ENCODE measurements at regions of chr22 and their contacts with region 1.

Region 1: DNA sequence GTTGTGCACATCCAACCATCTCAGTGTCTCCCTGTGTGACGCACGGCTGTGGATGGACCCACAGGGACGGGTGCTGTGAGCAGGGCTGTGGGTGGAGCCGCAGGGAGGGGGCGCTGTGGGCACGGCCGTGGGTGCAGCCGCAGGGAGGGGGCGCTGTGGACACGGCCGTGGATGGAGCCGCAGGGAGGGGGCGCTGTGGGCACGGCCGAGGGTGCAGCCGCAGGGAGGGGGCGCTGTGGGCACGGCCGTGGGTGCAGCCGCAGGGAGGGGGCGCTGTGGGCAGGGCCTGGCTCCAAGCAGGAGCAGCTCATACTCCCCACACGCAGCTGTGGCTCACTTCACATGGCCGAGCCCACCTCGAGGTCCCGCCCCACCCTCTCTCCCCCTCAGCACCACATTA is 6.0 kb upstream of the MAPK11 start:
- DNase-seq: peak; percentile 81
- H3K4me3 ChIP-seq: no peak overlapping the region
- H3K27ac ChIP-seq: peak overlapping the region in 1 of 4 donors; percentile 40
- H3K4me1 ChIP-seq: peaks cover 10 to 12% (median 11%) of the 10 kb centered on the region in 4 donors
- H3K27me3 ChIP-seq: peaks cover 11% of the 10 kb centered on the region
- CTCF ChIP-seq: peak; percentile 9 to 74 (median 54)
- EP300 ChIP-seq: no peak
- POLR2A ChIP-seq: no peak

Region 2: DNA sequence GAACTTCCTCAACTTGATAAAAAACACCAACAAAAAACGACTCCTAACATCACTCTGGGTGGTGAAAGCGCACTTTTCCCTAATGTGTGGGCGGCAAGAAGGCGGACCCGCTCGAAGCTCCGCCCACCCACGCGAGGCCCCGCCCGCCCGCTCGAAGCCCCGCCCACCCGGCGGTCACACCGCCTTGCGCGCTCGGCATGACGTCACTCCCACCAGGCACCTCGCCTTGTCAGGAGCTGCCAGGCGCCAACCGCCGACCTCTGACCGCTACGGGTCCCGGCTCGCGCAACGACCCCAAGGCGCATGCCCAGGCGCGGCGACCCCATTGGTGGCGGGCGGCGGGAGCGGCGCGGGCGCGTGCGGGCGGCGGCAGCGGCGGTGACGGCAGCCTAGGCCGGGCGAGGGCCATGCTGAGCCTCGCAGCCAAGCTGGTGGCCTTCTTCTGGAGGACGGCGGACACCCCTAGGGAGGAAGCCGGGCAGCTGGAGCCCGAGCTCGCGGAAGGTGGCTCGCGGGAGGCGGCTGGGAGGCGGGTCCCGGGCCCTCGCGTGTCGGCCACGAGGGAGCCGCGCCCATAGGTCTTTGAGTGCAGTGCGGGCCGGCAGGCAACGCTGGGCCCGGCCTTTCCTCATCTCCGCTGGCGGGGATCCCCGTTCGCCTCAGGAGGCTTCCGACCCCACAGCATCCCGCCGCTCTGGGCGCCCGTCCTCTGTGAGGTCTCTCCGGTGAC is 186.3 kb before region 1 on chr22 and contains the start of gene MOV10L1:
- in situ Hi-C with region 1: no loop called
- intact Hi-C with region 1: no loop called
- DNase-seq: no peak
- H3K4me3 ChIP-seq: no peak within 1 kb of the TSS
- H3K27ac ChIP-seq: no peak within 1 kb of the TSS
- H3K4me1 ChIP-seq: no peaks in the 10 kb centered on the region
- H3K27me3 ChIP-seq: peaks cover 29% of the 10 kb centered on the region
- CTCF ChIP-seq: no peak
- EP300 ChIP-seq: no peak
- POLR2A ChIP-seq: no peak
- total RNA-seq, gene MOV10L1: 0.20 to 0.48 (median 0.41) TPM in 3 of 4 donors, not detected in the other

Region 3: GRCh38 chr22:50315289-50316115 is 39.4 kb after region 1 on chr22:
- in situ Hi-C with region 1: no loop called
- intact Hi-C with region 1: no loop called
- DNase-seq: no peak
- H3K4me3 ChIP-seq: no peak overlapping the region
- H3K27ac ChIP-seq: peak overlapping the region in 3 of 4 donors; percentile 65 to 73 (median 69)
- H3K4me1 ChIP-seq: peaks cover 6 to 15% (median 12%) of the 10 kb centered on the region in 4 donors
- H3K27me3 ChIP-seq: no peaks in the 10 kb centered on the region
- CTCF ChIP-seq: no peak
- EP300 ChIP-seq: no peak
- POLR2A ChIP-seq: no peak

Region 4: DNA sequence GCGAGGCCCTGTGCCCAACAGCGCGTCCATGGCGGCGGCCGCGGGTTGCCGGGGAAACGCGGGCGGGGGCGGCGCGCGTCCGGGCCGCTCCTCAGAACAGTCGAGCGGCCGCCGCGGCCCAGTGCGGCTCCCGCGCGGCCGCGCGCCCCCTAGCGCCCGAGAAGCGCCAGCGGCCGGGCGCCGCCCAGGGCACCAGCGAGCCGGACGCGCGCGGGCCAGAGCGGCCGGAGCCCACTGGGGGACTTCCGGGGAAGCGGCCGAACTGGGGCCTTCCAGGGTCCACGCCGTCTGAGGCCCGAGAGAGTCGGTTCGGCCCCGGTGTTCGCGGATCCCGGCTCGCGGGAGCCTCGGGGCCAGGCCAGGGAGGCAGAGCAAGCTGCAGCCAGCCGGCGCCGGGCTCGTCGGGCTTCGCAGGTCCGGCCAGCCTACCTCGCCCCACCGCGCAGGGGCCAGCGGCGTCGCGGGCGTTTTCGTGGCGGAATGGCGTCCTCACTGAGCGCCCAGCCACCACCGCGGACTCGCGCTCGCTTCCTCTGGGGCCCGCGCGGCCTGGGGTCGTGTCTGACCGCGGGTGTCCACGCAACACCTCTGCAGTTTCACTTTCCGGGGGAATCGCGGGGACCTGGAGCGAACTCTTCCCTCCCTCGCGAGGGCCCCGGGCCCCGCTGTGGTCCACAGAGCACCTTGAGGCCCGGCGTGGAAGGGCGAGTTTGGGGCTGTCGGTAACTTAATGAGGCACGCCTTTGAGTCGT is 51.0 kb after region 1 on chr22 and contains the start of gene DENND6B:
- in situ Hi-C with region 1: loop called in 2 of 4 experiments (anchors 5 to 10 kb)
- intact Hi-C with region 1: loop called (anchors 5 kb)
- DNase-seq: peak; percentile 83
- H3K4me3 ChIP-seq: peak within 1 kb of the TSS; percentile 50 to 82 (median 76)
- H3K27ac ChIP-seq: peak within 1 kb of the TSS; percentile 93 to 94 (median 94)
- H3K4me1 ChIP-seq: peaks cover 11 to 24% (median 13%) of the 10 kb centered on the region in 4 donors
- H3K27me3 ChIP-seq: no peaks in the 10 kb centered on the region
- CTCF ChIP-seq: peak; percentile 38 to 64 (median 43)
- EP300 ChIP-seq: no peak
- POLR2A ChIP-seq: peak; percentile 67
- total RNA-seq, gene DENND6B: 3.2 to 22.7 (median 8.3) TPM

Region 5: GRCh38 chr22:50339945-50340879 is 64.1 kb after region 1 on chr22:
- in situ Hi-C with region 1: loop called in 1 of 4 experiments (anchors 10 kb)
- intact Hi-C with region 1: no loop called
- DNase-seq: no peak
- H3K4me3 ChIP-seq: no peak overlapping the region
- H3K27ac ChIP-seq: no peak overlapping the region
- H3K4me1 ChIP-seq: peaks cover 4 to 12% (median 7%) of the 10 kb centered on the region in 4 donors
- H3K27me3 ChIP-seq: no peaks in the 10 kb centered on the region
- CTCF ChIP-seq: no peak
- EP300 ChIP-seq: no peak
- POLR2A ChIP-seq: no peak

Region 6: DNA sequence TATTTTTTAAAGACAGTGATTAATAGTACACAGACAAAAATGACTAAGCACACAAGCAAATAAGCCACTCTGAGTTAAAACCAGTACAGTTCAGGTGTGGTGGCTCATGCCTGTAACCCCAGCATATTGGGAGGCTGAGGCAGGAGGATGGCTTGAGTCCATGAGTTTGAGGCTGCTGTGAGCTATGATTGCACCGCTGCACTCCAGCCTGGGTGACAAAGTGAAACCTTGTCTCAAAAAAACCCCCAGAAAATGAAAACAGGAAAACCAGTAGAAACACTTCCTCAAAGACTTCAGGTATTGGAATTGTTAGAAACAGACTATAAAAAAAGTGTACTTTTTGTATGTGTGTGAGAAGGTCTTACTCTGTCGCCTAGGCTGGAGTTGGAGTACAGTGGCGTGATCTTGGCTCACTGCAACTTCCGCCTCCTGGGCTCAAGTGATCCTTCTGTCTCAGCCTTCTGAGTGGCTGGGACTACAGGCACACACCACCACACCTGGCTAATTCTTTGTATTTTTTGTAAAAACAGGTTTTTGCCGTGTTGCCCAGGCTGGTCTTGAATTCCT is 100.0 kb after region 1 on chr22:
- in situ Hi-C with region 1: no loop called
- intact Hi-C with region 1: no loop called
- DNase-seq: no peak
- H3K4me3 ChIP-seq: no peak overlapping the region
- H3K27ac ChIP-seq: no peak overlapping the region
- H3K4me1 ChIP-seq: no peaks in the 10 kb centered on the region
- H3K27me3 ChIP-seq: no peaks in the 10 kb centered on the region
- CTCF ChIP-seq: no peak
- EP300 ChIP-seq: no peak
- POLR2A ChIP-seq: no peak

Measured in transverse colon (tissue), 4 donors.